GM10248 (cell line): ENCODE measurements at regions of chr15 and their contacts with region 1.

Region 1: GRCh38 chr15:64046347-64047153 is at the start of gene DAPK2:
- DNase-seq: peak; percentile 93
- CTCF ChIP-seq: peak; percentile 76

Region 2: DNA sequence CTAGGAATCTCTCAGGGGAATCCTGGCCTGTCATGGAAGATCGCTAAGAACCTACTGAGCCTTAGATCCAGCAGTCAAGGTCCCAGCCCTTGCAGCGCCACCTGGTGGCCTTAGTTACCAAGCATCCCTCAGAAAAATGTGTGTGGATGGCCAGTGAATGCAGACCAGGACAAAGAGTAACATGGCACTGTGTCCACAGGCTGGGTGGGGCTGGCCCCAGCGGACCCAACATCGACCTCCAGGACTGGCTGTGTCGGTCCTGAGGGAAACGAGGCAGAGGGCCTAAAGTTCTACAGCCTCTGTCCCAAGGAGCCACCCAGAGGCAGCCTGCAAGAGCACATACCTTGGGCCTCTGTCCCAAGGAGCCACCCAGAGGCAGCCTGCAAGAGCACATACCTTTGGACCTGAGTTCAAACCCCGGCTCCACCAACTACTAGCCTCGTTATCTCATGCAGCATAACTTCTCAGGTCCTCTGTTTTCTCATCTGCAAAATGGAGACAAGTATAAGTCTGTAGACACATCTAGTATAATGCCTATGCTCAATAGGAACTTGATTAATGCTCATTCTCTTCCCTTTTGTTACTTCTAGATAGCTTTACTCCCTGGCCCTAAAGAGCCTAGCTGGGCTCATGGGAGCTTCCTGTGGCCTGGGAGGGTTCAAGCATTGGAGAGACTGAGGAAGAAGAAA is 155.3 kb before region 1 on chr15:
- CTCF ChIA-PET with region 1: interaction called, 11 read pairs
- POLR2A ChIA-PET with region 1: no interaction called
- DNase-seq: peak; percentile 69
- CTCF ChIP-seq: peak; percentile 87

Region 3: GRCh38 chr15:63970621-63971426 is 75.7 kb before region 1 on chr15:
- CTCF ChIA-PET with region 1: interaction called, 15 read pairs
- POLR2A ChIA-PET with region 1: no interaction called
- DNase-seq: peak; percentile 78
- CTCF ChIP-seq: no peak

Region 4: DNA sequence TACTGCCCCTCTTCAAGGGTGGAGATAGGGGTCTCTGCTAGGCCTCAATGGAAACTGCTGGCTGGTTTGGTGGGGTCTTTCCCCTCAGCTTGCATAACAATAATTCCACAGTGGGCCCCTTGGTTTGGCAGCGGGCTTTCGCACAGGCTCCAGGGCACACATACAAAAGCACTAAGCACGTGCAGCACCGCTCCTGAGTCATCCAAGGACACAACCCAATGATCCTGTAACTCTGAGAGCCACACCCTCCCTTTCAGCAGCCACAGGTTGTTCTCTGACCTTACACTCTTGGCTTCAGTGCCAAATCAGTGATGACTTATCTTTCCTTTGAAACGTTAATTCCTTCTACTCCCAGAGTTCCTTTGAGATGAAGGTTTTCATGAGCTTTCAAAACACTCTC is 42.0 kb before region 1 on chr15:
- CTCF ChIA-PET with region 1: interaction called, 30 read pairs
- POLR2A ChIA-PET with region 1: no interaction called
- DNase-seq: no peak
- CTCF ChIP-seq: no peak

Region 5: DNA sequence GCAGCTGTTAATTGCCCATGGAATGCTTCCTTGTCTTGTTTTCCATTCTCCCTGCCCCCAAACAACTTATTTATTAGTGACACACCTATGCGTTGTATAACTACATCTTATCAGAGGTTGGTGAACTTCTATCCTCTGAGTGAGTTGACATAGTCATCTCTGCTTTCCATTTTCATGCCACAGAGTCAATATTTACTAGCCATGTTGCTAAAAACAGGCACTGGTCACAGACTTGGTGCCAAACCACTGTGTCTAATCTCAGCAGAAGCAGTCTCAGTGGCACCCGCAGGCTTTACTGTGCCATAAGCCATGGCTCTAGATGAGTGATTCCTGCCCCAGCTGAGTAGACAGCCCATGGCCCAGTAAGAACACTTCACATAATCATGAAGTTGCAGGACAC is 26.8 kb before region 1 on chr15:
- CTCF ChIA-PET with region 1: interaction called, 22 read pairs
- POLR2A ChIA-PET with region 1: no interaction called
- DNase-seq: no peak
- CTCF ChIP-seq: no peak

Region 6: GRCh38 chr15:64060716-64061115 is 14.2 kb after region 1 on chr15:
- CTCF ChIA-PET with region 1: interaction called, 39 read pairs
- POLR2A ChIA-PET with region 1: no interaction called
- DNase-seq: no peak
- CTCF ChIP-seq: no peak